MCF 10A (cell line): ENCODE measurements at regions of chr1 and their contacts with region 1.

Region 1: GRCh38 chr1:42681741-42682483 is at the start of gene YBX1:
- DNase-seq: peak; percentile 99
- H3K4me3 Mint-ChIP-seq: peak within 1 kb of the TSS; percentile 89
- H3K27ac Mint-ChIP-seq: peak within 1 kb of the TSS; percentile 98
- H3K4me1 Mint-ChIP-seq: peaks cover 36% of the 10 kb centered on the region
- H3K27me3 Mint-ChIP-seq: no peaks in the 10 kb centered on the region
- CTCF ChIP-seq: no peak
- total RNA-seq, gene YBX1: 1,134 and 1,200 TPM in 2 replicates

Region 2: GRCh38 chr1:42462828-42463763 is 218.8 kb before region 1 on chr1 and contains the start of gene CCDC30:
- CTCF ChIA-PET with region 1: no interaction called
- POLR2A ChIA-PET with region 1: interaction called, 3 read pairs
- intact Hi-C with region 1: loop called (anchors 1 kb)
- DNase-seq: peak; percentile 99
- H3K4me3 Mint-ChIP-seq: peak within 1 kb of the TSS; percentile 81
- H3K27ac Mint-ChIP-seq: peak within 1 kb of the TSS; percentile 89
- H3K4me1 Mint-ChIP-seq: peaks cover 11% of the 10 kb centered on the region
- H3K27me3 Mint-ChIP-seq: no peaks in the 10 kb centered on the region
- CTCF ChIP-seq: no peak
- total RNA-seq, gene CCDC30: 2.2 and 3.2 TPM in 2 replicates

Region 3: GRCh38 chr1:42479599-42479998 is 202.3 kb before region 1 on chr1:
- CTCF ChIA-PET with region 1: no interaction called
- POLR2A ChIA-PET with region 1: no interaction called
- intact Hi-C with region 1: no loop called
- DNase-seq: peak; percentile 16
- H3K4me3 Mint-ChIP-seq: no peak overlapping the region
- H3K27ac Mint-ChIP-seq: no peak overlapping the region
- H3K4me1 Mint-ChIP-seq: no peaks in the 10 kb centered on the region
- H3K27me3 Mint-ChIP-seq: no peaks in the 10 kb centered on the region
- CTCF ChIP-seq: no peak

Region 4: GRCh38 chr1:42700006-42700405 is 18.1 kb after region 1 on chr1:
- CTCF ChIA-PET with region 1: no interaction called
- POLR2A ChIA-PET with region 1: interaction called, 78 read pairs
- intact Hi-C with region 1: no loop called
- DNase-seq: peak; percentile 27
- H3K4me3 Mint-ChIP-seq: no peak overlapping the region
- H3K27ac Mint-ChIP-seq: peak overlapping the region; percentile 32
- H3K4me1 Mint-ChIP-seq: peaks cover 13% of the 10 kb centered on the region
- H3K27me3 Mint-ChIP-seq: no peaks in the 10 kb centered on the region
- CTCF ChIP-seq: no peak

Region 5: DNA sequence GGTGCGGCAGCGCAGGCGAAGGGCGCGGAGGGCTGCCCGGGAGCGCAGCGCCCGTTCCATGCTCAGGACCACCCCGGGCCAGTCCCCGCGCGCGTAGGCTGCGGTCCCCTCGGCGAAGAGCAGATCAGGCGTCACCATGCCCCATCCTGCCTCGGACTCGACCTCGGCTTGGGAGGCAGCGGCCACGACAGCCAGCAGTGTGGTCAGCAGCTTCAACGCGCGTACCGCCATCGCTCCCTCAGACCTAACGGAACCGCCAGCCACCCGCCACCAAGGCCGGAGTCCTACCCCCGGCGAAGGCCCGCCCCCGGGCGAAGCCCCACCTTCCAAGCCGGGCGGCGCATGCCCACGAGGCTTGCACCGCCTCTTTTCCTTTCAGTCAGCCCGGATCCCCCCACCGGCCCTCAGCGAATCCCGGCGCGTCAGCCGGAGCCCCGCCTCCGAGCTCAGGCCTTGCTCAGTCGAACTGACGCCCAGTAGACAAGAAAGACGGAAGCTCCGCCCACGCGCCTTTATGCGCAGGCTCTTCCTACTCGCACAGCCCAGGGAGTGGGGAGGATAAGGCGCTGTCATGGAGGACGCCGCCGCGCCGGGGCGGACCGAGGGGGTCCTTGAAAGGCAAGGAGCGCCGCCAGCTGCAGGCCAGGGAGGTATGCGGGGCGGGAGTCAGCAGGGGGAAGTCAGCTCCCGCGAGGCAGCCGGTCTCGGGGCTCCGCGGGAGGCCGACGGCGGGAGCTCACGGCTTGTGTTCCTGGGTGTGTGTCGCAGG is 85.0 kb after region 1 on chr1 and contains the starts of genes C1orf50 and P3H1:
- CTCF ChIA-PET with region 1: interaction called, 5 read pairs
- POLR2A ChIA-PET with region 1: interaction called, 104 read pairs
- intact Hi-C with region 1: no loop called
- DNase-seq: peak; percentile 99
- H3K4me3 Mint-ChIP-seq: no peak within 1 kb of the TSS
- H3K27ac Mint-ChIP-seq: no peak within 1 kb of the TSS
- H3K4me1 Mint-ChIP-seq: peaks cover 6% of the 10 kb centered on the region
- H3K27me3 Mint-ChIP-seq: no peaks in the 10 kb centered on the region
- CTCF ChIP-seq: no peak
- total RNA-seq, gene C1orf50: 11.7 and 13.8 TPM in 2 replicates
- total RNA-seq, gene P3H1: 36.1 and 57.2 TPM in 2 replicates